ENCODE measurements at regions of chr7 and their contacts with region 1.

Region 1: DNA sequence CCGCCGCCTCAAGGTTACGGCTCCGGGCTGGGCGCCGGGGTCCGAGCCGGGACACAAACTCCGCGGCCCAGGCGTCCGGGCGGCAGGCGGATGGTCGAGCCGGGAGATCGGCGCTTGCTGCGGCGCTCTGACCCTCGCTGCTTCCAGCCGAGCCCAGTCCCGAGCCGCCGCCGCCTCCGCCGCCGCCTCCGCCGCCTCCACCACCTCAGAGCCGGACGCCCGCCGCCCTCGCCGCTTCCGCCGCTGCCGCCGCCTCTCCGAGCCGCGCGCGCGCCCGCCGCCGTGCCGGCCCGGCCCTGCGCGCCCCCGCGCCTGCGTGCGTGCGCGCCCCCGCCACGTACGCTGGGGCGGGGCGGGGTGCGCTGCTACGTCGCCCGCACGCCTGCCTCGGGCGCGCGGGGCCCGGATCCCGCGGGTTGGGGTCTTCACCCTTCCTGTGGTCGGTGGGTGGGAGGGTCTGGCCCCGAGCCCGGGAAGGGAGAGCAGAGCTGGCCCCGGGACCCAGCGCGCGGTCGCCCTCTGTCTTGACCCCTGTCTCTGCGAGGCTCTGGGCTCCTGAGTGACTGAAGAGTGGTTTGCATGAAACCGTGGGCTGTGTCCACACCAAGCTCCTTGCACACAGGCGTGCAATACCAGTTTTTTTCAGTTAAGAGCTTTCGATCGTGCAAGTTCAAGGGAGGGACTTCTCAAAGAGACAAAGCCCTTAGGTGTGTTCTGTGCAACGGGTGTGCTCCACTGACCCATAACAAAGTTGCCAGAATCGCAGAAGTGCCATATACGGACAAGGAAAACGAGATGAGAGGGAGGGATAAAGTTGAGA is at the start of gene SMURF1:
- DNase-seq: peak; percentile 77
- H3K4me3 Mint-ChIP-seq: peak within 1 kb of the TSS; percentile 92
- H3K27ac Mint-ChIP-seq: peak within 1 kb of the TSS; percentile 87
- H3K4me1 Mint-ChIP-seq: peaks cover 30% of the 10 kb centered on the region
- H3K27me3 Mint-ChIP-seq: peaks cover 4% of the 10 kb centered on the region
- total RNA-seq, gene SMURF1: 14.9 and 15.9 TPM in 2 replicates

Region 2: GRCh38 chr7:98280791-98281756 is 863.0 kb before region 1 on chr7 and contains the start of gene BRI3:
- intact Hi-C with region 1: loop called (anchors 5 kb)
- DNase-seq: peak; percentile 75
- H3K4me3 Mint-ChIP-seq: peak within 1 kb of the TSS; percentile 88
- H3K27ac Mint-ChIP-seq: peak within 1 kb of the TSS; percentile 83
- H3K4me1 Mint-ChIP-seq: peaks cover 16% of the 10 kb centered on the region
- H3K27me3 Mint-ChIP-seq: no peaks in the 10 kb centered on the region
- total RNA-seq, gene BRI3: 67.1 and 68.3 TPM in 2 replicates

Region 3: GRCh38 chr7:98878365-98879165 is 265.5 kb before region 1 on chr7 and contains the start of gene TRRAP:
- intact Hi-C with region 1: loop called (anchors 2 kb)
- DNase-seq: peak; percentile 70
- H3K4me3 Mint-ChIP-seq: peak within 1 kb of the TSS; percentile 95
- H3K27ac Mint-ChIP-seq: peak within 1 kb of the TSS; percentile 92
- H3K4me1 Mint-ChIP-seq: peaks cover 13% of the 10 kb centered on the region
- H3K27me3 Mint-ChIP-seq: peaks cover 10% of the 10 kb centered on the region
- total RNA-seq, gene TRRAP: 66.9 and 69.6 TPM in 2 replicates

Region 4: DNA sequence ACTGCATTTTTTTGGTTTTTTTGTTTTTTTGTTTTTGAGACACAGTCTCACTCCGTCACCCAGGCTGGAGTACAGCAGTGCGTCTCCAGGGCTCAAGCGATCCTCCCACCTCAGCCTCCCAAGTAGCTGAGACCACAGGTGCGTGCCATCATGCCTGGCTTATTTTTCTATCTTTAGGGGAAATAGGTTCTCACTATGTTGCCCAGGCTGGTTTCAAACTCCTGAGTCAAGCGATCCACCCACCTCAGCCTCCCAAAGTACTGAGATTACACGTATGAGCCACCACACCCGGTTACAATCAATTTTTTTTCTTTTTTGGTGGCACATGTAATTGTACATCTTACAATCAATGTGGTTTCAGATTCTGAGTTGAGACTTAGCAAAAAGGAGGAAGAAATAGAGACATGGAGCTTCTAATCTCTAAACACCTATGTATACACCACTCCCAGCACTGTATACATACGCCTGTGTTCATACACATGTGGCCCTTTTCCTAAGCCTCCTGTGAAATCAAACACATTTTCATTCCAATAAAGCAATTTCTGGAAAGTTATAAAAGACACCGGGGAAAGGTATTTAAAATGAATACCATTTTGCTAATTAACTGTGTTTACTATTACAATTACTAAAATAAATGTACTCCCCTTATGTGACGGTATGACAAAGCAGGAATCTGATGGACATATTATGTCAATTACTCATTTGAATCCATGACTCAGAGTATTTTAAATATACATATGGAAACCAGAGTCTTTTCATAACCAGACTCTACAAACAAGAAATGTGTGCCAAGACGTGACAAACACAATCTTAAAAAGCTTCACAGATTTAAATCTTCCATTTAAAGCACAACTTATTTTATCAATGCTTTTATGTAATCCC is 41.0 kb before region 1 on chr7:
- intact Hi-C with region 1: loop called (anchors 5 kb)
- DNase-seq: no peak
- H3K4me3 Mint-ChIP-seq: no peak overlapping the region
- H3K27ac Mint-ChIP-seq: peak overlapping the region; percentile 15
- H3K4me1 Mint-ChIP-seq: peaks cover 23% of the 10 kb centered on the region
- H3K27me3 Mint-ChIP-seq: no peaks in the 10 kb centered on the region

Region 5: DNA sequence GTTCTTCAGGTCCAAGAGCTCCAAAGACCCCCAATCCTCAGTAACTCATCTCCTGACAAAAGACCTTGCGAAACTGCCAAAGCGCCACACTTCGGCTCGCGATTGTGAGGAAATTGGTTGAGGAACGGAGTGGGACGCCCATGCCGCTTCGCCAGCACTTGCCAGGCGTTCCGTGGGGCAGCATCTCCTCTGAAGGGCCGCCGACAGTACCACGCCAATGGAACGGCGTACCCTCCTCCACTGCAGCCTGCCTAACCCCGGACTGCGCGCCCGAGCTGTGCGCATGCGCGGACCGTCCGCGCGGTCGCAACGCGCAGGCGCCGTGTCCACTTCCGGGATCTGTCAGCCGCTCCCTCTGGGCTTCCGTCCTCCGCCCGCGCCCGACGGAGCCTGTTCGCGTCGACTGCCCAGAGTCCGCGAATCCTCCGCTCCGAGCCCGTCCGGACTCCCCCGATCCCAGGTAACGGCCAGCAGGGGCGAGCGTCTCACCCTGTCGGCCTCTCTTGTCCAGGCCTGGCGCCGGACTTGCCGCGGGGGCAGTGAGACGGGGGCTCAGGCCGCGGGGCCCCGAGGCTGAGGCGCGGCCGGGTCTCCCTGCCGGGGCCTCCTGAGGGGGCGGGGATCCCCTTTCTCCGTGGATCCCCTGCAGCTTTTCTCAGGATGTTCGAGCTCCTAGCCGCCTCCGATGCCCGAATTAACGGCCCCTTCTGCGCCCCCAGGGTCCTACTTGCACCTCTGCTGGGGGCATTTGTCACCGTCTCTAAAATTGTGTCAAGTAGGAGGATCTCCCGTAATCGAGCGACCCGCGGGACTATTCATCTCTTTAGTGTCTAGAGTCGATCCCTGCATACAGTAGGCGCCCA is 181.7 kb after region 1 on chr7 and contains the start of gene ARPC1A:
- intact Hi-C with region 1: loop called (anchors 5 kb)
- DNase-seq: peak; percentile 94
- H3K4me3 Mint-ChIP-seq: peak within 1 kb of the TSS; percentile 93
- H3K27ac Mint-ChIP-seq: peak within 1 kb of the TSS; percentile 79
- H3K4me1 Mint-ChIP-seq: peaks cover 37% of the 10 kb centered on the region
- H3K27me3 Mint-ChIP-seq: peaks cover 4% of the 10 kb centered on the region
- total RNA-seq, gene ARPC1A: 72.4 and 75.9 TPM in 2 replicates

Measured in activated T-helper 1 cell treated with anti-CD3 and anti-CD28 coated beads, Interleukin-12 subunit alpha, Interleukin-12 subunit beta, Interleukin-2, Interleukin-4 antibody, amounts not matched to agents 30 ng/mL and 10 ng/mL and 1 ng/mL, durations not matched to agents 14 hours and 24 hours and 36 hours (primary cell).